ENCODE measurements at regions of chr6 and their contacts with region 1.

Region 1: DNA sequence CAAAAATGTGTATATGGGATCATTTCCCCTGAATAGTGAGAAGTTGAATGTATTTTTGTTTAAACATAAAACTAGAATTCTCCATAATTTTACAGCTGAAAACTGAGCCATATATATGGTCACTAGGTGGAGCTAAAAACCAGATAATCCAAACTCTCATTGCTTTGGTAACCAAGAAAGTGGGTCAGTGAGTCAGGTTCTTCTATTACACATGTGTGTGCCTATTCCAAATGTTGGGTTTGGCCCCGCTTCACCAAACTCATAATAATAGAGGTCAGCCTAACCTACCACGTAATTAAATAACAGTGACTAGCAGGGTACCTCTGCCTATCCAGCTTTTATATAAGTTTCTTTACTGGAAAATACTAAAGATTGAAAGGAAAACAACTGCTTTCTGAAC is 19.3 kb upstream of the RNGTT start:
- DNase-seq: peak; percentile 33
- H3K4me3 Mint-ChIP-seq: no peak overlapping the region
- H3K27ac Mint-ChIP-seq: no peak overlapping the region
- H3K4me1 Mint-ChIP-seq: no peaks in the 10 kb centered on the region
- H3K27me3 Mint-ChIP-seq: no peaks in the 10 kb centered on the region

Region 2: GRCh38 chr6:88748141-88748540 is 234.6 kb before region 1 on chr6:
- CTCF ChIA-PET with region 1: no interaction called
- POLR2A ChIA-PET with region 1: no interaction called
- intact Hi-C with region 1: no loop called
- DNase-seq: no peak
- H3K4me3 Mint-ChIP-seq: no peak overlapping the region
- H3K27ac Mint-ChIP-seq: no peak overlapping the region
- H3K4me1 Mint-ChIP-seq: no peaks in the 10 kb centered on the region
- H3K27me3 Mint-ChIP-seq: no peaks in the 10 kb centered on the region

Region 3: GRCh38 chr6:89122625-89123024 is 139.9 kb after region 1 on chr6:
- CTCF ChIA-PET with region 1: interaction called, 4 read pairs
- POLR2A ChIA-PET with region 1: no interaction called
- intact Hi-C with region 1: loop called (anchors 5 kb)
- DNase-seq: no peak
- H3K4me3 Mint-ChIP-seq: no peak overlapping the region
- H3K27ac Mint-ChIP-seq: no peak overlapping the region
- H3K4me1 Mint-ChIP-seq: no peaks in the 10 kb centered on the region
- H3K27me3 Mint-ChIP-seq: peaks cover 2% of the 10 kb centered on the region

Region 4: GRCh38 chr6:89242574-89243330 is 260.0 kb after region 1 on chr6:
- CTCF ChIA-PET with region 1: interaction called, 64 read pairs
- POLR2A ChIA-PET with region 1: no interaction called
- intact Hi-C with region 1: loop called (anchors 1 kb)
- DNase-seq: no peak
- H3K4me3 Mint-ChIP-seq: no peak overlapping the region
- H3K27ac Mint-ChIP-seq: no peak overlapping the region
- H3K4me1 Mint-ChIP-seq: peaks cover 10% of the 10 kb centered on the region
- H3K27me3 Mint-ChIP-seq: peaks cover 2% of the 10 kb centered on the region

Region 5: DNA sequence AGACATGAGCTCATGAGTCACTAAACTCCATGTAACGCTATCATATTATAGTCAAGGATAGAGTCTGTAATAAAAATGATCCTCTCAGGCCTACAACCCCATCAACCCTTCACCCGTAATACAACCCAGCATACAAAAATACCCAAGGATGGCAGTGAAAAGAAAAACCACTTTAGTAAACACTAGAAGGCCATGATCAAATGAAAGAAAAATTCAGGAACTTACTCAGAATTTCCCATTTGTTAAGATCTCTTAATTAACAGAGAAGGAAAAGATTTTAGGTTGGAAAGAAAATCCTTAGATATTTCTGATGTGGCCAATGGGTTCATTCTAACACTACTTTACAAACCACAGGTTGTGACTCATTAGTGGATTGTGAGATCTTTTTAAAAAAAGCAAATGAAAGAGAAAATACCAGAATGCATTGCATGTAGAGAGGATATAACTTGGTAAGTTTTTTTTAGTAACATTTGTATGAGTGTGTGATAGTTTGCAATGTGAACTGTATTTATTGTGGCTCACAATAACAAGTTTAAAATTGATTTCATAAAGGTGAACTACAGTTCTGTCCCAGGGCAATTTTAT is 377.8 kb after region 1 on chr6:
- CTCF ChIA-PET with region 1: interaction called, 13 read pairs
- POLR2A ChIA-PET with region 1: no interaction called
- intact Hi-C with region 1: no loop called
- DNase-seq: no peak
- H3K4me3 Mint-ChIP-seq: no peak overlapping the region
- H3K27ac Mint-ChIP-seq: peak overlapping the region; percentile 58
- H3K4me1 Mint-ChIP-seq: peaks cover 51% of the 10 kb centered on the region
- H3K27me3 Mint-ChIP-seq: no peaks in the 10 kb centered on the region